ENCODE measurements at regions of chr19 and their contacts with region 1.

Region 1: DNA sequence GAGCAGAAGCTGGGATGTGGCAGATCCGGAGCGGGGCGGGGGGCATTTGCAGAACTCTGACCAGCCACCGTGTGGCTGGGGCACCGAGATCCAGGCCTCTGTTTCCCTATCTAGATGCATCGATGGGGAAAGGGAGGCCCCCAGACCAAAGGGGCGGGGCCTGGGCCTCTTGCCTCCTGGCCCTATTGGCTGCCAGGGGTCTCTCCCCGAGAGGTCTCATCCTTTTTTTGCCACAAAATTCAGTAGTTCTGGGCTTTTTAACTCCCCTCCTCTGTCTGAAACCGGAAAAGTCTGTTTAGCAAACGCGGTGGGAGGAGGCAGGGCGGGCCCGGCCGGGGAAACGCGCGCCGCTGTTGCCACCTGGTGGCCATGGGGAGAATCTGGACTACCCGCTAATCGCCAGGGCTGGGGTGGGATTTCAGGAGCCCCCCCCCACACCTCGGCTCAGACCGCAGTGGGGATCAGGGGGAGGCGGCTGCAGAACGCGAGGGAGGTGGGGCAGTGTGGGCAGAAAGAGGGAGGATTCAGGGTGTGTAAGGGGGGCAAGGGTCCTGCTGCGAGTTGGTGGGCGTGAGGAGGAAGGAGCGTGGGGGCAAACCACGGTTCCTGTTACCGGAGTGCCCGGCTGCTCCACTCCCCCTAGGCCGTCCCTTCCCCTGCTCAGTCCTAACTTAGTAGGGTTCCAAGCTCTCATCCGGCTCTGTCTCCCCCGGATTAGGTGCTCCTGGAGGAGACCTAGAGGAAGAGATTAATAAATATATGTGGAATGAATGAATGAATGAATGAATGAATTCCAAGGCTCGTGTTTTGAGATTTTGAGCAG is 28.3 kb downstream of the IL12RB1 start:
- DNase-seq: peak; percentile 54 to 86 (median 77)
- H3K4me3 ChIP-seq: peak overlapping the region in 56 of 59 donors; percentile 4 to 61 (median 38)
- H3K27ac ChIP-seq: peak overlapping the region; percentile 76 to 99 (median 96)
- H3K27me3 ChIP-seq: no peaks in the 10 kb centered on the region
- CTCF ChIP-seq: peak; percentile 94 to 100 (median 98)

Region 2: DNA sequence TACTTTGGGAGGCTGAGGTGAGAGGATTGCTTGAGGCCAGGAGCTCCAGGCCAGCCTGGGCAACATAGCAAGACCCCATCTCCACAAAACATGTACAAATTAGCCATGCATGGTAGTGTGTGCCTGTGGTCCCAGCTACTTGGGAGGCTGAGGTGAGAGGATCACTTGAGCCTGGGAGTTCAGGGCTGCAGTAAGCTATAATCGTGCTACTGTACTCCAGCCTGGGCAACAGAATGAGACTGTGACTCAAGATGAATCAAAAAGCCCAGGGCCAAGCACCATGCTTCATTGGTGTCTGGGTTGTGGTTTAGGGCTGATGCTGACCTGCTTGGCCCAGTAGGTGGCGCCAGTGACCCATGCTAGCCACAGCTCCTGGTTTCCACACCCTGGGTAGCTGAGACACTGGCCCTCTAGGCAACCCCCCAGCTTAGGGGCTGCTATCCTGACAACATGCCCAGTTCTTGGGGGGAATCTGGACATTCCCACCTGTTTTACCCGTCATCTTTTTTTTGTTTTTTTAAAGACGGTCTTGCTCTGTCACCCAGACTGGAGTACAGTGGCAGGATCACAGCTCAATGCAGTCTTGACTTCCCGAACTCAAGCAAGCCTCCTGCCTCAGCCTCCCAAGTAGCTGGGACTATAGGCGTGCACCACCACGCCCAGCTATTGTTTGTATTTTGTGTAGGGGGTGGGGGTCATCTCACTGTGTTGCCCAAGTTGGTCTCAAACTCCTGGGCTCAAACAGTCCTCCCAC is 120.2 kb before region 1 on chr19:
- intact Hi-C with region 1: loop called (anchors 2 to 5 kb)
- DNase-seq: peak; percentile 72 to 89 (median 84)
- H3K4me3 ChIP-seq: no peak overlapping the region
- H3K27ac ChIP-seq: no peak overlapping the region
- H3K27me3 ChIP-seq: no peaks in the 10 kb centered on the region
- CTCF ChIP-seq: peak; percentile 71 to 98 (median 93)

Region 3: GRCh38 chr19:18007044-18007916 is 51.1 kb before region 1 on chr19:
- intact Hi-C with region 1: loop called (anchors 1 kb)
- DNase-seq: peak; percentile 75 to 93 (median 82)
- H3K4me3 ChIP-seq: peak overlapping the region; percentile 50 to 94 (median 73)
- H3K27ac ChIP-seq: peak overlapping the region; percentile 72 to 99 (median 93)
- H3K27me3 ChIP-seq: no peaks in the 10 kb centered on the region
- CTCF ChIP-seq: peak; percentile 90 to 100 (median 98)

Region 4: GRCh38 chr19:18021121-18021755 is 37.2 kb before region 1 on chr19:
- intact Hi-C with region 1: loop called in 1 of 2 experiments (anchors 5 kb)
- DNase-seq: peak in 9 of 10 donors; percentile 69 to 89 (median 82)
- H3K4me3 ChIP-seq: peak overlapping the region in 48 of 59 donors; percentile 1 to 61 (median 43)
- H3K27ac ChIP-seq: peak overlapping the region; percentile 57 to 100 (median 98)
- H3K27me3 ChIP-seq: no peaks in the 10 kb centered on the region
- CTCF ChIP-seq: no peak

Region 5: DNA sequence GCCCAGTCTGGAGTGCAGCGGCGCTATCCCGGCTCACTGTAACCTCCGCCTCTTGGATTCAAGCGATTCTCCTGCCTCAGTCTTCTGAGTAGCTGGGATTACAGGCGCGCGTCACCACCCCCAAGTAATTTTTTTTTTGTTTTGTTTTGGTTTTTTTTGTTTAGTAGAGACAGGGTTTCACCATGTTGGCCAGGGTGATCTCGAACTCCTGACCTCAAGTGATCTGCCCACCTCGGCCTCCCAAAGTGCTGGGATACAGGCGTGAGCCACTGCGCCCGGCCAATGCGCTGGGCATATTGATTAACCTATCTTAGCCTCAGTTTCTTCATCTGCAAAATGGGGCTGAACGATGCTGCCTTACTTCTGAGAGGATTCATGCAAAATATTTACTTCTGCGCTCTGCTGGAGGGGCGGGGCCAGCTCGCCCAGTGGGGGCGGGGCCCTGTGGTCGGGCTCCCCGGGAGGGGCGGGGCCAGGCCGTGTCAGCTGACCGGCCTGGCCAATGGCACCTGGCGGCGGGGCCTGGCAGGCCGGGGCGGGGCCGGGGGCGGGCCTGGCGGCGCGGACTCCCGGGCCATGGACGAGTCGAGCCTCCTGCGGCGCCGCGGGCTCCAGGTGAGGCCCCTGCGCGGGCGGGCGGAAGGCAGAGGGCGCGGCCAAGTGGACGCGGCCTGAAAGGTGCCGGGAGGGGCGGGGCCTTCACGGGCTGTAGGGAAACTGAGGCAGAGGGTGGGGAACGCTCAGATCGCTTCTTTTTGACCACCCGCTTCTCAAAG is 39.0 kb after region 1 on chr19 and contains the start of gene MAST3:
- intact Hi-C with region 1: loop called in 1 of 2 experiments (anchors 5 kb)
- DNase-seq: peak; percentile 27 to 92 (median 88)
- H3K4me3 ChIP-seq: peak within 1 kb of the TSS; percentile 52 to 94 (median 76)
- H3K27ac ChIP-seq: peak within 1 kb of the TSS; percentile 4 to 100 (median 90)
- H3K27me3 ChIP-seq: peaks cover 0 to 7% (median 0%) of the 10 kb centered on the region in 45 donors
- CTCF ChIP-seq: peak in 3 of 56 donors; percentile 15 to 25 (median 22)
- total RNA-seq, gene MAST3: 138 to 282 (median 205) TPM

Region 6: GRCh38 chr19:18152444-18152816 is 94.0 kb after region 1 on chr19:
- intact Hi-C with region 1: loop called in 1 of 2 experiments (anchors 5 kb)
- DNase-seq: peak; percentile 87 to 98 (median 96)
- H3K4me3 ChIP-seq: peak overlapping the region; percentile 42 to 99 (median 88)
- H3K27ac ChIP-seq: peak overlapping the region; percentile 89 to 99 (median 97)
- H3K27me3 ChIP-seq: no peaks in the 10 kb centered on the region
- CTCF ChIP-seq: peak in 54 of 56 donors; percentile 30 to 78 (median 61)

Region 7: GRCh38 chr19:18205200-18205892 is 146.9 kb after region 1 on chr19:
- intact Hi-C with region 1: no loop called
- DNase-seq: peak; percentile 47 to 91 (median 82)
- H3K4me3 ChIP-seq: peak overlapping the region; percentile 36 to 96 (median 82)
- H3K27ac ChIP-seq: peak overlapping the region; percentile 84 to 100 (median 98)
- H3K27me3 ChIP-seq: no peaks in the 10 kb centered on the region
- CTCF ChIP-seq: peak in 8 of 56 donors; percentile 3 to 21 (median 11)